CD8-positive, alpha-beta memory T cell (primary cell): ENCODE measurements at regions of chr9 and their contacts with region 1.

Region 1: DNA sequence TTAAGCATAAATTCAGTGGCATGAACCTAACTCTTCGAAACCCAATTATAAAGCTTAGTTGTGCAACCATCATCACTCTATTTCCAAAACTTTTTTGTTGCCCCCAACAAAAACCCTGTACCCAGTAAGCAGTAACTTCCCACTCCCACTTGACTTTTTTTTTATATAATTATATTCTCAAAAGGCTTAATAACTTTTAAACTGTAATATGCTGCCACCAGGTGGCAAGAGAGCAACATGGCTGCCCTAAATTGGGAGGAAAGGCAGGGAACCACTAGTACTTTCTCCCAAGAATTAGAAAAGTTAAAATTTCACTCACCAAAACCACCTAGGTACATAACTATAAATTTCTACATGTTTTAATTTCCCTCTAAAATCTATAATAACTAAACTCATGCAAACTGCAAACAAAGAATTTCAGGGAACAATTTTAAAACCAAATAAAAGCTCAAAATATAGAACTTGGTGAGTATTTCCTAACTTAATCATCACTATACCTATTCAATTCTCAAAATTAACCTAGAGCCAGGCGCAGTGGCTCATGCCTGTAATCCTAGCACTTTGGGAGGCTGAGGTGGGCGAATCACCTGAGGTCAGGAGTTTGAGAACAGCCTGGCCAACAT is 50.2 kb upstream of the RNF38 start:
- DNase-seq: peak in 1 of 5 donors; percentile 26
- H3K4me3 ChIP-seq: no peak overlapping the region
- H3K4me3 Mint-ChIP-seq: no peak overlapping the region
- H3K27ac ChIP-seq: no peak overlapping the region
- H3K27ac Mint-ChIP-seq: peak overlapping the region in 2 of 8 donors; percentile 33 to 41
- H3K4me1 ChIP-seq: peaks cover 7% of the 10 kb centered on the region
- H3K4me1 Mint-ChIP-seq: peaks cover 34 to 61% (median 39%) of the 10 kb centered on the region in 3 donors
- H3K27me3 ChIP-seq: no peaks in the 10 kb centered on the region
- H3K27me3 Mint-ChIP-seq: no peaks in the 10 kb centered on the region

Region 2: GRCh38 chr9:36400332-36401163 is 49.7 kb before region 1 on chr9:
- CTCF ChIA-PET with region 1: interaction called, 10 read pairs
- POLR2A ChIA-PET with region 1: no interaction called
- DNase-seq: peak; percentile 89 to 92 (median 90)
- H3K4me3 ChIP-seq: peak overlapping the region; percentile 79
- H3K4me3 Mint-ChIP-seq: peak overlapping the region; percentile 89 to 98 (median 94)
- H3K27ac ChIP-seq: peak overlapping the region; percentile 96
- H3K27ac Mint-ChIP-seq: peak overlapping the region; percentile 97 to 99 (median 98)
- H3K4me1 ChIP-seq: peaks cover 36% of the 10 kb centered on the region
- H3K4me1 Mint-ChIP-seq: peaks cover 44 to 57% (median 55%) of the 10 kb centered on the region in 3 donors
- H3K27me3 ChIP-seq: no peaks in the 10 kb centered on the region
- H3K27me3 Mint-ChIP-seq: peaks cover 0 to 1% of the 10 kb centered on the region in 2 donors

Region 3: DNA sequence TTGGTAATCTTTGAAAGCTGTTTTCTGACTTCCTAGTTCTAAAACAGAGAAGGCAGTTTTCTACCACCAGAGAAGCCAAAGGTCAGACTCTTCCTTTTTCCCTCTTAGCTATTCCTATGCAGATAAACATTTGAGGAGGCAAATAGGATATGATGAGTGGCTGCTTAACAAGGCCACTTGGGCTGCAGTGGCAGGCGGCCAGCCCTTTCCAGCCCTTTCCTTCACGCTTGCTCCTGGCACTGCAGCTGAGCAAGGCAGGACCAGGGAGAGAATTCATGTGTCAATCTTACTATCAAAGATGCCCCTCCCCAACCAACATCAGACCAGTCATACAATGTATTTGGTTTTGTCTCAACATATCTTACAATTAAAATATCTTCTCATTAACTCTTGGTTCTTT is 13.3 kb before region 1 on chr9:
- CTCF ChIA-PET with region 1: interaction called, 16 read pairs
- POLR2A ChIA-PET with region 1: no interaction called
- DNase-seq: no peak
- H3K4me3 ChIP-seq: no peak overlapping the region
- H3K4me3 Mint-ChIP-seq: no peak overlapping the region
- H3K27ac ChIP-seq: no peak overlapping the region
- H3K27ac Mint-ChIP-seq: peak overlapping the region in 4 of 8 donors; percentile 37 to 60 (median 50)
- H3K4me1 ChIP-seq: peaks cover 15% of the 10 kb centered on the region
- H3K4me1 Mint-ChIP-seq: peaks cover 37 to 61% (median 44%) of the 10 kb centered on the region in 3 donors
- H3K27me3 ChIP-seq: no peaks in the 10 kb centered on the region
- H3K27me3 Mint-ChIP-seq: no peaks in the 10 kb centered on the region

Region 4: GRCh38 chr9:36560857-36561221 is 110.6 kb after region 1 on chr9:
- CTCF ChIA-PET with region 1: interaction called, 12 read pairs
- POLR2A ChIA-PET with region 1: no interaction called
- DNase-seq: no peak
- H3K4me3 ChIP-seq: no peak overlapping the region
- H3K4me3 Mint-ChIP-seq: no peak overlapping the region
- H3K27ac ChIP-seq: no peak overlapping the region
- H3K27ac Mint-ChIP-seq: no peak overlapping the region
- H3K4me1 ChIP-seq: no peaks in the 10 kb centered on the region
- H3K4me1 Mint-ChIP-seq: peaks cover 0 to under 1% (median under 1%) of the 10 kb centered on the region in 3 donors
- H3K27me3 ChIP-seq: no peaks in the 10 kb centered on the region
- H3K27me3 Mint-ChIP-seq: peaks cover 0 to 5% of the 10 kb centered on the region in 2 donors